HepG2 (cell line): ENCODE measurements at regions of chr19 and their contacts with region 1.

Region 1: GRCh38 chr19:51637362-51637978 is 7.3 kb upstream of the SIGLEC5 start:
- DNase-seq: peak; percentile 33
- ATAC-seq: no peak
- H3K4me3 ChIP-seq: no peak overlapping the region
- H3K27ac ChIP-seq: no peak overlapping the region
- H3K4me1 ChIP-seq: no peaks in the 10 kb centered on the region
- H3K27me3 ChIP-seq: no peaks in the 10 kb centered on the region
- CTCF ChIP-seq: peak; percentile 53
- EP300 ChIP-seq: no peak
- POLR2A ChIP-seq: no peak
- RAD21 ChIP-seq: no peak

Region 2: DNA sequence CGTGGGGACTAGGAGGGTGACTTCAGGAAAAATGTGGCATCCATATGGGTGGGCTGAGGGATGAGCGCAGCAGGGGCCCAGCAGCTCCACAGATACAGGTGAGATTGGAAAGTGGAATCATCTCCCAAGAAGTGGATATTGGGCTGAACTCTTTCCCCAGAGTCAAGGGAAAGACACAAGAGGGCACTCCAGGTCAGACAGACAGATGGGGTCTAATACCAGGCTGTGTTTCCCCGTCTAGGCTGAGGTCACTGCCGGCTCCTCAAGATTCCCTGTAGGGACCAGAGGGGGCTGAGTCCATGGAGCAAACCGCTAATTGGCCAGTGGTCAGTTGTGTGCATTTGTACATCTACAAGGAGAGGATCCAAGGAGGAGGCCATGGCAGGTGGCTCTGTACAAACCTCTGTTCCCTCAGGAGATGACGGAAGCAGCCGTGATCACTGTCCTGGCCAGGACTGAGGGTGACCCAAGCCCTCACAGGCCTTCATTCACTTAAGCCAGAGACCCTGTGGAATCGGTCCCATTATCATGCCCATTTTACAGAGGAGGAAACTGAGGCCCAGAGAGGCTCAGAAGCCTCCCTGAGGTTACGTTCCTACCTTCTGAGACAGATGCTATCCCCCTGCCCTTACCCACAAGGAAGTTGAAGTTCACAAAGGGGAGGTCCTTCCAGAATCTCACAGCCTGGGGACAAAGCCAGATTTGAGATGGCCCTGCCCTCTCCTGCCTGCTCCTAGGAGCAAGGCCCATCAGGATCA is 341.0 kb before region 1 on chr19:
- CTCF ChIA-PET with region 1: no interaction called
- POLR2A ChIA-PET with region 1: no interaction called
- in situ Hi-C with region 1: loop called (anchors 25 kb)
- intact Hi-C with region 1: no loop called
- DNase-seq: peak; percentile 23
- ATAC-seq: peak; percentile 67
- H3K4me3 ChIP-seq: no peak overlapping the region
- H3K27ac ChIP-seq: no peak overlapping the region
- H3K4me1 ChIP-seq: no peaks in the 10 kb centered on the region
- H3K27me3 ChIP-seq: peaks cover 5 to 61% of the 10 kb centered on the region in 2 experiments; a peak in 4 of 5 replicates
- CTCF ChIP-seq: peak; percentile 57
- EP300 ChIP-seq: no peak
- POLR2A ChIP-seq: no peak
- RAD21 ChIP-seq: 0 out of 2 replicates have a peak, but pooled peaks have one; percentile 32

Region 3: DNA sequence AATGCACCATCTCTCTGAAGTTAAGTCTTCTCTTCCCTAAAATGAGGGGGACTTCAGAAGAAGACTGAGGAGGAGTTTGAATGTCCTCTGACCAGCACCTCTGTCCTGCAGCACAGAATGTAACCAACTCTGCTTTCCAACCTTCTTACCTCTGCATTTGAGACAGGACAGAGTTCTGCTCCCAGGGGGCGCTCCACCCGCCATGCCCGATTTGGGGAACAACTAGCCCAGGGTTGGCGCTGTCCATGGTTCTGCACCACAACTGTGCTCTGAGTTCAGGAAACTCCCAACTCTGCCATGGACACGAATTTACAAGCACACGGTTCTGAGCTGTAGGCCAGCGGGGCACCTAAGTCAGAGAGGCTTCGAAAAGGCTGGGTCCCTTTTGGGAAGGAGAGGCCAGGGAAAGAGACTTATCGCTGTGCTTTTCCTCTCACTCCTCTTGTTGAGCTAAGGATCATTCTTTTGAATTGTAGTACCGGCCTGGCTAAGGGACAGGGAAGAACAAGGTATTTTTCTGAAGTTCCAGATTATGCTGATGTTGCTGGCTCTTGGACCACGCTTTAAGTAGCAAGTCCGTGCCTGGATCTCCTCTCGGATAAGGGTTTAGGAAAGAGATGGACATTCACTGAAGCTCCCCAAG is 29.4 kb before region 1 on chr19:
- CTCF ChIA-PET with region 1: no interaction called
- POLR2A ChIA-PET with region 1: no interaction called
- in situ Hi-C with region 1: no loop called
- intact Hi-C with region 1: no loop called
- DNase-seq: peak; percentile 60
- ATAC-seq: peak; percentile 71
- H3K4me3 ChIP-seq: no peak overlapping the region
- H3K27ac ChIP-seq: no peak overlapping the region
- H3K4me1 ChIP-seq: no peaks in the 10 kb centered on the region
- H3K27me3 ChIP-seq: no peaks in the 10 kb centered on the region
- CTCF ChIP-seq: peak; percentile 82
- EP300 ChIP-seq: no peak
- POLR2A ChIP-seq: no peak
- RAD21 ChIP-seq: no peak; the same call in 1 of the 2 replicates